T-cell (primary cell): ENCODE measurements at regions of chrX and their contacts with region 1.

Region 1: DNA sequence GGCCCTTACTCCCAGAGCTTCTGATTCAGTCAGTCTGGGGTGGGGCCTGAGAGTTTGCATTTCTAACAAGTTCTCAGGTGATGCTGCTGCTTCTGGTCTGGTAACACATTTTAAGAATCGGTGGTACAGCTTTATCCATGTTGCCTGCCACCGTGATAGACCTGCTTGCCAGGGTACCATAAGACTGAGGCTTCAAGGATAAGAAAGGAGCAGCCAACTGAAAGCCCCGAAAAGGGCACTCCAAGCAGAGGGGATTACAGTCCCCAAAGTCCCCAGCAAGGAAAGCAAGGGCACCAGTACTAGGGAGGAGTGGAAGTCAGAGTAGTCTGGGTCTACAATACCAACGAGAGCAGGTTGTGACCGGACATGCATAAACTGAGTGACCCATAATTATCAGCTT is 49.8 kb downstream of the APOO start:
- DNase-seq: no peak
- ATAC-seq: no peak
- H3K4me3 ChIP-seq: no peak overlapping the region
- H3K4me3 Mint-ChIP-seq: no peak overlapping the region
- H3K27ac ChIP-seq: no peak overlapping the region
- H3K27ac Mint-ChIP-seq: no peak overlapping the region
- H3K4me1 ChIP-seq: no peaks in the 10 kb centered on the region
- H3K4me1 Mint-ChIP-seq: peaks cover 0 to 13% (median 5%) of the 10 kb centered on the region in 3 donors
- H3K27me3 ChIP-seq: no peaks in the 10 kb centered on the region
- H3K27me3 Mint-ChIP-seq: no peaks in the 10 kb centered on the region

Region 2: DNA sequence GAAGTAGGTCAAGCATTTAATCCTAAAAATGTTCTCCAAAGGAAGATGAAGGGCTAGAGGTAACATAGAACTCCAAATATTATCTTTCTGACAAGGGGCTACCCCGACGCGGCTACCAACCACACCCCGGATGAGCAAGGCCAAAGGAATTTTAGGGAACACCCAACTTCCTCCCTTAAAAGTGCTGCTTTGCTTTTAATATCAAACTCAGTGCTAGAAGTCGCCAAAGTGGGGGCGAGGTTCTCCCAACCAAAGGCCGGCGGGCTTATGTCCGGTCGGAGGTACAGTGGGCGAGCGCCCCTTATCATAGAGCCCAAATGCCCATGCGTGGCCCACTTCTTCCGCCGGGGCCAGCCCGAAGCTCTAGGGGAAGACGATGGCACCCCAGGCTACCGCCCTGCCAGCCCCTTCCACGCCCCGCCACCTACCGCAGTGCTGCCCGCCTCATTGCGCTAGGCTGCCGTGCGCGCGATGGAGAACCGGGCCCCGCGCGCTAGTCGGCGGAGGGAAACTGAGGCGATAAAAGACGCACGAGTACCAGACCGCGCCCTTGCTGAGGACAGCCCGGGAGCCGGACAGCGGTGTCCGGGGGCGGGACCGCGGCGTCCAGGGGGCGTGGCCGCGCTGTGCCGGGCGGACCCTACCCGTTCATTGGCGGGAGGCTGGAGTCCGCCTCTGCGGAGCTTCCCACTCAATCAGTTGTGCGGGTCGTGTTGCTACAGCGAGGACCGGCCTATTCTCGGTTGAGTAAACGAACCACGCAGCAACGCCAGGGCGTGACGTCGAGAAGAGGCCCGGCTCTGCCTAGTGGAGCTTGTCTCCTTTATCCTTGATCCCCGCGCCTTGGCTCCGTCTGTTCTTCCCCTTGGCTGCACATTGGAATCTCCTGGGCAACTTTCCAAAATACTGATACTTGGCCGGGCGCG is 115.0 kb before region 1 on chrX and contains the start of gene ACOT9:
- CTCF ChIA-PET with region 1: no interaction called
- POLR2A ChIA-PET with region 1: no interaction called
- DNase-seq: peak; percentile 31 to 76 (median 61)
- ATAC-seq: peak; percentile 88 to 92 (median 90)
- H3K4me3 ChIP-seq: peak within 1 kb of the TSS; percentile 70 to 73
- H3K4me3 Mint-ChIP-seq: peak within 1 kb of the TSS; percentile 66 to 88 (median 77)
- H3K27ac ChIP-seq: peak within 1 kb of the TSS; percentile 66
- H3K27ac Mint-ChIP-seq: peak within 1 kb of the TSS; percentile 71 to 79
- H3K4me1 ChIP-seq: peaks cover 0 to 31% of the 10 kb centered on the region in 2 experiments
- H3K4me1 Mint-ChIP-seq: peaks cover 13 to 37% (median 23%) of the 10 kb centered on the region in 3 donors
- H3K27me3 ChIP-seq: no peaks in the 10 kb centered on the region
- H3K27me3 Mint-ChIP-seq: no peaks in the 10 kb centered on the region
- total RNA-seq, gene ACOT9: 15.0 to 22.1 (median 19.2) TPM

Region 3: DNA sequence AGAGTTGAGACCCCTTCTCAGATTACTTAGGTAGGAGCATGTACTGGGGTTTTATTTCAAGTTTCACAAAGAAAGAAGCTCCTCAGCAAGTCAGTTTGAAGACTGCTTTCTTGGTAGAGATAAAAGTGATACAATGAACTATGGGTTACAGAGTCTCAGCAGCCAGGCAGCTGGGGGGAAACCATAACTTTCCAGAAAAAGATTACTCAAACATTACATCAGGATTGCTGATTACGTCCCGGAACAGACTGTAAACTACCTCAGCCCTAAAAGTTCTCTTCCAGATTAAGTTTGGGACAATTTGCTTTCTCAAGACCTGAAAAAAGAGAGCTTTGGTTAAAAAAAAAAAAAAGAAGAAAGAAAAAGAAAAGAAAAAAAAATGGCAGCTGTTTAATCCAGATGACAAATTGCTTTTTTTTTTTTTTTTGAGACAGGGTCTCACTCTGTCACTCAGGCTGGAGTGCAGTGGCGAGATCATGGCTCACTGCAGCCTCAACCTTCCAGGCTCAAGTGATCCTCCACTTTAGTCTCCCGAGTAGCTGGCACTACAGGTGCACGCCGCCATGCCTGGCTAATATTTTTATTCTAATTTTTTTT is 58.4 kb before region 1 on chrX:
- CTCF ChIA-PET with region 1: no interaction called
- POLR2A ChIA-PET with region 1: interaction called in 1 of 2 experiments, 18 read pairs
- DNase-seq: no peak
- ATAC-seq: no peak
- H3K4me3 ChIP-seq: no peak overlapping the region
- H3K4me3 Mint-ChIP-seq: no peak overlapping the region
- H3K27ac ChIP-seq: no peak overlapping the region
- H3K27ac Mint-ChIP-seq: no peak overlapping the region
- H3K4me1 ChIP-seq: no peaks in the 10 kb centered on the region
- H3K4me1 Mint-ChIP-seq: peaks cover 0 to 2% (median 0%) of the 10 kb centered on the region in 3 donors
- H3K27me3 ChIP-seq: no peaks in the 10 kb centered on the region
- H3K27me3 Mint-ChIP-seq: no peaks in the 10 kb centered on the region

Region 4: DNA sequence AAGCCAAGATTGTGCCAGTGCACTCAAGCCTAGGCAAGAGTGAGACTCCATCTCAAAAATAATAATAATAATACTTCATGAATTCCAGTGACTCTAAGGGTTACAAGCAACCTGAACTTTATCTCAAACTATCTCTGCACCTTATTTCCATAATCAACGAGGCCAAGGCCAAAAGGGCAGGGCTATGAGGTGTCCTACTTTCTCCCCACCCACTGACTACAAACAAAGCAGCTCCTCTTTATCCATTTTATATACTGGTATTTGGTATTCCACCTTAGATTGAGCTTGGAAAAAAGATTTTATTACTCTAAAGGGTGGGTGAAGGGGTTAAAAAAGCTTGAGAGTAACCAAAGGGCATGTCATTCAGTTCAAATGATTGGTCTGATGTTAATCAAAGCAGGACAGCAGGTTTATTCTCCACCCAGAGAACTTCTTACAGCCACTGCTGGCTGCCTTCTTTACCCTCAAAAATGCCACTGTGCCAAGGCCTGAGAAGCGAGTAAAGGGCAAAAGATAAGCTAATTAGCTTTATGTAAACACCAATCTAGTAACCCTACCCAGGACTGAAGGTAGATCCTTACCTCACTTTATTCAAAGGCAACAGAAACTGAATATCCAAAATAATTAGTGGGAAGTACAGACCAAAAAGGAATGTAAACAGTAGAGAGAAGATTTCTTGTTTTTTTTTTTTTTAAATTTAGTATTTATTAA is 21.6 kb after region 1 on chrX:
- CTCF ChIA-PET with region 1: no interaction called
- POLR2A ChIA-PET with region 1: no interaction called
- DNase-seq: no peak
- ATAC-seq: no peak
- H3K4me3 ChIP-seq: no peak overlapping the region
- H3K4me3 Mint-ChIP-seq: no peak overlapping the region
- H3K27ac ChIP-seq: no peak overlapping the region
- H3K27ac Mint-ChIP-seq: no peak overlapping the region
- H3K4me1 ChIP-seq: no peaks in the 10 kb centered on the region
- H3K4me1 Mint-ChIP-seq: peaks cover 0 to 5% (median 0%) of the 10 kb centered on the region in 3 donors
- H3K27me3 ChIP-seq: no peaks in the 10 kb centered on the region
- H3K27me3 Mint-ChIP-seq: no peaks in the 10 kb centered on the region

Region 5: GRCh38 chrX:23952984-23953907 is 95.3 kb after region 1 on chrX:
- CTCF ChIA-PET with region 1: no interaction called
- POLR2A ChIA-PET with region 1: no interaction called
- DNase-seq: peak in 34 of 35 experiments; percentile 2 to 58 (median 19)
- ATAC-seq: peak; percentile 89 to 94 (median 92)
- H3K4me3 ChIP-seq: peak overlapping the region; percentile 29 to 44
- H3K4me3 Mint-ChIP-seq: peak overlapping the region; percentile 67 to 87 (median 77)
- H3K27ac ChIP-seq: peak overlapping the region; percentile 82
- H3K27ac Mint-ChIP-seq: peak overlapping the region; percentile 85 to 96
- H3K4me1 ChIP-seq: peaks cover 7 to 9% of the 10 kb centered on the region in 2 experiments
- H3K4me1 Mint-ChIP-seq: peaks cover 29 to 44% (median 35%) of the 10 kb centered on the region in 3 donors
- H3K27me3 ChIP-seq: no peaks in the 10 kb centered on the region
- H3K27me3 Mint-ChIP-seq: no peaks in the 10 kb centered on the region